IMR-90 (cell line): ENCODE measurements at regions of chr1 and their contacts with region 1.

Region 1: GRCh38 chr1:17653728-17654351 is 101.3 kb upstream of the ACTL8 start:
- DNase-seq: peak; percentile 50
- ATAC-seq: peak; percentile 90
- H3K4me3 ChIP-seq: no peak overlapping the region
- H3K27ac ChIP-seq: no peak overlapping the region
- H3K4me1 ChIP-seq: no peaks in the 10 kb centered on the region
- H3K27me3 ChIP-seq: no peaks in the 10 kb centered on the region
- CTCF ChIP-seq: peak; percentile 86
- POLR2A ChIP-seq: no peak
- RAD21 ChIP-seq: peak; percentile 79

Region 2: GRCh38 chr1:17865912-17866739 is 212.3 kb after region 1 on chr1:
- CTCF ChIA-PET with region 1: no interaction called
- POLR2A ChIA-PET with region 1: no interaction called
- dilution Hi-C with region 1: no loop called
- in situ Hi-C with region 1: no loop called
- intact Hi-C with region 1: loop called (anchors 1 kb)
- DNase-seq: peak; percentile 95
- ATAC-seq: peak; percentile 90
- H3K4me3 ChIP-seq: no peak overlapping the region
- H3K27ac ChIP-seq: peak overlapping the region; percentile 95
- H3K4me1 ChIP-seq: peaks cover 26% of the 10 kb centered on the region
- H3K27me3 ChIP-seq: no peaks in the 10 kb centered on the region
- CTCF ChIP-seq: no peak
- POLR2A ChIP-seq: no peak
- RAD21 ChIP-seq: no peak

Region 3: DNA sequence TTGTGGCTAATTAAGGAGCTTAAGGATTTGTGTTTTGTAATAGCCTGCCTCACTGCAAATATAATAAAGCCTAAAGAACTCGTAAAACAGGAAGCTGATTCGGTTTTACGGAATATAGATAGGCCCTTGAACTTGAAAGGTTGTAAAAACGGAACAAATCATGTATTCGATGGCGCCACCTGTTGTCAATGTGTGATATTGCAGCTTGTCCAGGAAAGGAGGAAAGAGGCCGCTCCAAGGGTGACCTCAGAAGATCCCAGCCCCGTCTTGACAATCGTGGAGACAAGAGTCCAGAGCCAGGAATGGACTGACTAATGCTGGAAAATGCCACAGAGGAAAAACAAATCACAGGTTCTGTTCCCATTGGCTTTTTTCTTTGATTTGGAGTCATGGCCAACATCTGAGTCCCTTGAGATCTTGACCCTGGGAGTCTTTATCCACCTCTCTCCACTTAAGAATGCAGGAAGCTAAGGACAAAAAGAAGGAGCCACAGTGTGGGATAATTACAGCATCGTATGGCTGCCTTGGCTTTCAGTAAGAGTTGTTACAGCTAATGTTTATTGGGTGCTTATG is 446.7 kb after region 1 on chr1:
- CTCF ChIA-PET with region 1: no interaction called
- POLR2A ChIA-PET with region 1: no interaction called
- dilution Hi-C with region 1: no loop called
- in situ Hi-C with region 1: loop called (anchors 5 kb)
- intact Hi-C with region 1: loop called (anchors 1 kb)
- DNase-seq: peak; percentile 49
- ATAC-seq: peak; percentile 82
- H3K4me3 ChIP-seq: no peak overlapping the region
- H3K27ac ChIP-seq: no peak overlapping the region
- H3K4me1 ChIP-seq: no peaks in the 10 kb centered on the region
- H3K27me3 ChIP-seq: peaks cover 3% of the 10 kb centered on the region; the same call in 1 of the 2 replicates
- CTCF ChIP-seq: peak; percentile 73
- POLR2A ChIP-seq: no peak
- RAD21 ChIP-seq: peak; percentile 63

Region 4: GRCh38 chr1:18575620-18576019 is 921.8 kb after region 1 on chr1:
- CTCF ChIA-PET with region 1: no interaction called
- POLR2A ChIA-PET with region 1: no interaction called
- dilution Hi-C with region 1: no loop called
- in situ Hi-C with region 1: loop called (anchors 10 kb)
- intact Hi-C with region 1: loop called (anchors 2 kb)
- DNase-seq: peak; percentile 8
- ATAC-seq: peak; percentile 81
- H3K4me3 ChIP-seq: no peak overlapping the region
- H3K27ac ChIP-seq: no peak overlapping the region
- H3K4me1 ChIP-seq: no peaks in the 10 kb centered on the region
- H3K27me3 ChIP-seq: no peaks in the 10 kb centered on the region; the same call in 1 of the 2 replicates
- CTCF ChIP-seq: peak; percentile 50
- POLR2A ChIP-seq: no peak
- RAD21 ChIP-seq: peak; percentile 53

Region 5: GRCh38 chr1:18581420-18581880 is 927.6 kb after region 1 on chr1:
- CTCF ChIA-PET with region 1: no interaction called
- POLR2A ChIA-PET with region 1: no interaction called
- dilution Hi-C with region 1: no loop called
- in situ Hi-C with region 1: loop called (anchors 10 kb)
- intact Hi-C with region 1: loop called (anchors 2 kb)
- DNase-seq: no peak
- ATAC-seq: peak; percentile 72
- H3K4me3 ChIP-seq: no peak overlapping the region
- H3K27ac ChIP-seq: no peak overlapping the region
- H3K4me1 ChIP-seq: no peaks in the 10 kb centered on the region
- H3K27me3 ChIP-seq: no peaks in the 10 kb centered on the region
- CTCF ChIP-seq: peak; percentile 54
- POLR2A ChIP-seq: no peak
- RAD21 ChIP-seq: peak; percentile 57